ENCODE measurements at regions of chr12 and their contacts with region 1.

Region 1: DNA sequence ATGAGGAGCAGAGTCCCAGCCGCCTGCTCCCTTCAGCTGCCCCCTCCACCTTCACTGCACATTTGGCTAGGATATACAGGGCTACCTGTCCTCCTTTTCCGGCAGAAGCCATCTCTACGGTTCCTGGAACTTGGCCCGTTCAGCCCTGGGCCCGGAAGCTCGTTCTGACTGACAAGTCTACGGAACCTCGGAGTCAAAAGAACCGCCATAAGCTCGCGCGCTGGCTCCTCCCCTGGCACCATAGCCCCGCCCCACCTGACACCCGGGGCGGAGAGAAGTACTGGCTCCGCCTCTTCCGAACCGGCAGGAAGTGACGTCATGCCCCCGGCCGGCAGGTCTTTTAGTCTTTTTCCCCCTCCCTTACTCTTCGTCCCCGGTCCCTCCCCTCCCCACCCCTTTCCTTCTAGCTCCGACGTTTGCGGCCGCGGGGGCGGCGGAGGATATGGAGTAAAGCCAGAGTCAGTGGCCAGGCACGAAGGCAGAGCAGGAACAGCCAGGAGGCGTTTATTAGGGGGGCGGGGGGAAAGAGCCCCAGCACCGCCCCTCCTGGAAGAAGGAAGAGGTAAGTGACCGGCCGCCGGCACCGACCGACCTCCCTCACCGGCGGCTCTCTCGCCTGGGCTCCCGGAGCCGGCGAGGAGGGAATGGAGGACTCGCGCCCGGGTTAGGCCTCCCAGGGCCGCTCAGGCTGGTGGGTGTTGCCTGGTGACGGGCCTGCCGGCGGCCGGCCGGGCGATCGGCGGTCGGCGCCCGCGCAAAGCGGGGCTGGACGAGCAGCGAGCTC is at the starts of genes DEPDC4 and SCYL2:
- DNase-seq: peak; percentile 98
- H3K4me3 ChIP-seq: peak within 1 kb of the TSS; percentile 78 to 97 (median 95)
- H3K27ac ChIP-seq: peak within 1 kb of the TSS; percentile 77
- H3K4me1 ChIP-seq: peaks cover 19% of the 10 kb centered on the region
- H3K27me3 ChIP-seq: no peaks in the 10 kb centered on the region
- CTCF ChIP-seq: no peak
- POLR2A ChIP-seq: peak; percentile 42
- total RNA-seq, gene DEPDC4: 0.44 and 0.66 TPM in 2 replicates
- total RNA-seq, gene SCYL2: 41.4 and 41.6 TPM in 2 replicates

Region 2: DNA sequence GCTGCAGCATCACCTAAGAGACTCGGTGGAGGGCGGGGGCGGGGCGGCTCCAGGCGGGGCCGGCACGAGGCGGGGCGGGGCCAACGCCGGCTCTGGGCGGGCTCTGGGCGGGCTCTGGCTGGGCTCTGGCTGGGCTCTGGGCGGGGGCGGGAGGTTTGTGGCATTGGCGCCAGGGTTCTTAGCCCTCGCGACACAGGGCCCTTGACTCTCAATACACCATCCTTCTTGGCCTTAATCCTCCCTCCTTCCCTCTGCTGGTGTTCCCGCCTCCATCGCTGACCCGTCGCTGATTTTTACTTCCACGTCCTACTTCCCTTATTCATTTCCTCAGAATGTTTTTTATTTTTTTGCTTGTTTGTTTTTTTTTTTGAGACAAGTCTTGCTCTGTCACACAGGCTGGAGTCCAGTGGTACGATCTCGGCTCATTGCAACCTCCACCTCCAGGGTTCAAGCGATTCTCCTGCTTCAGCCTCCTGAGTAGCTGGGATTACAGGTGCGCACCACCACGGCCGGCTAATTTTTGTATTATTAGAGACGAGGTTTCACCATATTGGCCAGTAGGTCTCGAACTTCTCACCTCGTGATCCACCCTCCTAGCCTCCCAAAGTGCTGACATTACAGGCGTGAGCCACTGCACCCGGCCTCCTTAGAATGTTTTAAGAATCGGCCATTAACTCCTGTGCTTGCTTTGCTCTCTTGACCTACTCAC is 124.0 kb before region 1 on chr12 and contains the start of gene BLTP3B:
- CTCF ChIA-PET with region 1: no interaction called
- POLR2A ChIA-PET with region 1: no interaction called
- dilution Hi-C with region 1: no loop called
- intact Hi-C with region 1: loop called (anchors 2 kb)
- DNase-seq: peak; percentile 78
- H3K4me3 ChIP-seq: peak within 1 kb of the TSS; percentile 64 to 97 (median 74)
- H3K27ac ChIP-seq: peak within 1 kb of the TSS; percentile 91
- H3K4me1 ChIP-seq: peaks cover 5% of the 10 kb centered on the region
- H3K27me3 ChIP-seq: no peaks in the 10 kb centered on the region
- CTCF ChIP-seq: no peak
- POLR2A ChIP-seq: peak; percentile 53
- total RNA-seq, gene BLTP3B: 16.0 and 17.9 TPM in 2 replicates

Region 3: DNA sequence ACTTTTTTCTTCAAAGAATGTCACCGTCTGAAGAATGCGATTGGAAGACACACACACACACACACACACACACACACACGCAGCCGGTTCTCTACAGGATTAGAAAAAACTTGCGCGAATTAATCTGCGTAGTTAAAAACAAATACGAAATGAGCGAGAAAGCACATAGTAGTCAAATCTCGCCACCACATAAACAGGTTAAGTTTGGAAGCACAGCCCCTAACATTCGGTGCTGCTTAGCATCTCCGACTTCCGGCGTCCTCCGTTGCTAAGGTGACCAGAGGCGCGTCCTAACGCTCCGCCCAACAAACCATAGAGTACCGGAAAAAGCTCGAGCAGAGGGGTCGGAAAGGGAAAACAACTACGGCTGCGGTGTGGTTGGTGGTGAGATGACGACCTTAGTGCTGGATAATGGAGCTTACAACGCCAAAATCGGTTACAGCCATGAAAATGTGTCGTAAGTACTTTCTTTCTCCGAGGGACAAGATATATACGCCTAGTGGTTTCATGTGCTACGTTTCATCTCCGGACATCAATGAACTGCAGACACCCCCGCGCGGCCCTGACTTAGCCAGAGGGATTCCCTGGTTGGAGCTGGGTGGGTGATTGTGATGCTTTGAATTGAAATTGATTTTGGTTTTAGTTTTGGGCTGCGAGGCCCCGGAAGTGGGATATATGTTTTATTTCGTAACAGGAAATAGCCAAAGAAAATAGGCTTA is 66.4 kb before region 1 on chr12 and contains the start of gene ACTR6:
- CTCF ChIA-PET with region 1: interaction called, 4 read pairs
- POLR2A ChIA-PET with region 1: no interaction called
- dilution Hi-C with region 1: no loop called
- intact Hi-C with region 1: loop called (anchors 1 kb)
- DNase-seq: peak; percentile 96
- H3K4me3 ChIP-seq: peak within 1 kb of the TSS; percentile 74 to 99 (median 95)
- H3K27ac ChIP-seq: peak within 1 kb of the TSS; percentile 74
- H3K4me1 ChIP-seq: peaks cover 4% of the 10 kb centered on the region
- H3K27me3 ChIP-seq: no peaks in the 10 kb centered on the region
- CTCF ChIP-seq: no peak
- POLR2A ChIP-seq: peak; percentile 83
- total RNA-seq, gene ACTR6: 23.2 and 24.7 TPM in 2 replicates

Region 4: DNA sequence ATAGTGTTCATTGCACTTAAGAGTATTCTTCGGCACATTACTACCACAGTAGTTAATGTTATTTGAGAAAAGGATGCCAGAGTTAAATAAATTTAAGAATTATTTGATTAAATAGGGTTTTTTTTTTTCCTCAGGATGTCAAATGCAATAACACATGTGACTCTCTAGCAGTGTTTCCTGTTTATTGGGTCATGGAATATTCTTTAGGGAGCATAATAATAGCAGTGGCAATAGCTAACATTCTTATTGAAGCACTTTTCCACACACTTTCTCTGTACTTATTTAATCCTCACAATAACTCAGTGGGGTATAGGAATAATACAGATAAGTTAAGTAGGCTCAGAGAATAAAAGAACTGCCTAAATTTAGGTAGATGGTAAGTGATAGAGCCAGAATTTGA is 44.3 kb after region 1 on chr12:
- CTCF ChIA-PET with region 1: no interaction called
- POLR2A ChIA-PET with region 1: no interaction called
- dilution Hi-C with region 1: no loop called
- intact Hi-C with region 1: loop called (anchors 5 kb)
- DNase-seq: peak; percentile 43
- H3K4me3 ChIP-seq: no peak overlapping the region
- H3K27ac ChIP-seq: no peak overlapping the region
- H3K4me1 ChIP-seq: no peaks in the 10 kb centered on the region
- H3K27me3 ChIP-seq: no peaks in the 10 kb centered on the region
- CTCF ChIP-seq: no peak
- POLR2A ChIP-seq: no peak

Region 5: GRCh38 chr12:100564090-100564489 is 297.1 kb after region 1 on chr12:
- CTCF ChIA-PET with region 1: interaction called, 3 read pairs
- POLR2A ChIA-PET with region 1: no interaction called
- dilution Hi-C with region 1: no loop called
- intact Hi-C with region 1: loop called (anchors 2 kb)
- DNase-seq: peak; percentile 91
- H3K4me3 ChIP-seq: peak overlapping the region in 1 of 3 experiments; percentile 45
- H3K27ac ChIP-seq: peak overlapping the region; percentile 95
- H3K4me1 ChIP-seq: peaks cover 18% of the 10 kb centered on the region
- H3K27me3 ChIP-seq: peaks cover 5 to 13% of the 10 kb centered on the region in 2 experiments
- CTCF ChIP-seq: no peak
- POLR2A ChIP-seq: no peak